ENCODE measurements at regions of chr9 and their contacts with region 1.

Region 1: DNA sequence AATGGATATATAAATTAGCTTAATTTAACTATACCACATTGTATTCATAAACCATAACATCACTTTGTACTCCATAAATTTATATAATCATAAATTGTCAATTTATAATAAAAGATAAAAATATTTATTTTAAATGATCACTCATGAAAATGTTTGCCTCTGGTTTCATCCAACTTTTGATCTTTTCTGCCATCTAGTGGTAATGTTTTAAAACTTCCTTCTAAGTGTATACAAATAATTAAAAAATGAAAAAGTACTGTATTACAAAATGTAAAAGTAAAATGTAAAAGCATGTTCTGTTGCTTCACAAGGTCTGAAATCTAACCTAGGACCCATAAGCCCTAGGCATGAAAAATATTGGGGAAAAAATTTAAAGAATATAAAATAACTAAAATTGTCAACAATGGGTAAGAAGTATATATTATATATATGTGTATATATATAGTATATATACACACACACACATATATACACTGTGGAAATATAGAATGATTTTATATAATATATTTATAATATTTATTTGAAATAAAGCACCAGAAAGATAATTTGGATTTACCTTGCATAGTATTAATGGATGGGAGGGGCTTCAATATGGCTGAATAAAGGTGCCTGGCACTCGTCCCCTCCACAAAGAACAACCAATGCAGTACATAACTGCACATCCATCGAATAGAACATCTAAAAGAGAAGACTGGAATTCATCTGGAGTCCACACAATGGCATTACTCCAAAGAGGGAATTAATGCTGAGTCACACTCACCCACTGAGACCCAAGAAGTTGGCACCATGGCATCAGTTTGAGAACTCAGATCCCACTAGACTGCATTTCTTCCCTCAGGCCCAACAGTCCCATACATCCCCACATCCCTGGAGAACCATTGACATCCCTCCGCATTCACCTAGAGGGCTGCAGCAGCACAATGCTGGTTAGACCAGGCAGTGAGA is 32.5 kb downstream of the ANXA1 start:
- DNase-seq: peak in 1 of 2 experiments; percentile 52
- H3K4me3 ChIP-seq: no peak overlapping the region
- H3K27ac ChIP-seq: no peak overlapping the region
- H3K4me1 ChIP-seq: peaks cover 23% of the 10 kb centered on the region
- H3K27me3 ChIP-seq: no peaks in the 10 kb centered on the region
- CTCF ChIP-seq: peak; percentile 80

Region 2: GRCh38 chr9:72592502-72593403 is 591.4 kb before region 1 on chr9:
- CTCF ChIA-PET with region 1: no interaction called
- POLR2A ChIA-PET with region 1: no interaction called
- intact Hi-C with region 1: loop called (anchors 2 kb)
- DNase-seq: peak; percentile 37 to 67
- H3K4me3 ChIP-seq: no peak overlapping the region
- H3K27ac ChIP-seq: 0 out of 2 replicates have a peak overlapping the region, but pooled peaks have one; percentile 31
- H3K4me1 ChIP-seq: peaks cover 27% of the 10 kb centered on the region
- H3K27me3 ChIP-seq: no peaks in the 10 kb centered on the region
- CTCF ChIP-seq: peak; percentile 96

Region 3: GRCh38 chr9:72871685-72872084 is 312.5 kb before region 1 on chr9:
- CTCF ChIA-PET with region 1: no interaction called
- POLR2A ChIA-PET with region 1: no interaction called
- intact Hi-C with region 1: loop called (anchors 2 kb)
- DNase-seq: no peak
- H3K4me3 ChIP-seq: no peak overlapping the region
- H3K27ac ChIP-seq: no peak overlapping the region
- H3K4me1 ChIP-seq: no peaks in the 10 kb centered on the region
- H3K27me3 ChIP-seq: no peaks in the 10 kb centered on the region
- CTCF ChIP-seq: peak; percentile 73

Region 4: GRCh38 chr9:73038613-73039012 is 145.6 kb before region 1 on chr9:
- CTCF ChIA-PET with region 1: no interaction called
- POLR2A ChIA-PET with region 1: no interaction called
- intact Hi-C with region 1: loop called (anchors 5 kb)
- DNase-seq: peak; percentile 53 to 57
- H3K4me3 ChIP-seq: no peak overlapping the region
- H3K27ac ChIP-seq: no peak overlapping the region
- H3K4me1 ChIP-seq: peaks cover 30% of the 10 kb centered on the region
- H3K27me3 ChIP-seq: no peaks in the 10 kb centered on the region
- CTCF ChIP-seq: no peak

Region 5: DNA sequence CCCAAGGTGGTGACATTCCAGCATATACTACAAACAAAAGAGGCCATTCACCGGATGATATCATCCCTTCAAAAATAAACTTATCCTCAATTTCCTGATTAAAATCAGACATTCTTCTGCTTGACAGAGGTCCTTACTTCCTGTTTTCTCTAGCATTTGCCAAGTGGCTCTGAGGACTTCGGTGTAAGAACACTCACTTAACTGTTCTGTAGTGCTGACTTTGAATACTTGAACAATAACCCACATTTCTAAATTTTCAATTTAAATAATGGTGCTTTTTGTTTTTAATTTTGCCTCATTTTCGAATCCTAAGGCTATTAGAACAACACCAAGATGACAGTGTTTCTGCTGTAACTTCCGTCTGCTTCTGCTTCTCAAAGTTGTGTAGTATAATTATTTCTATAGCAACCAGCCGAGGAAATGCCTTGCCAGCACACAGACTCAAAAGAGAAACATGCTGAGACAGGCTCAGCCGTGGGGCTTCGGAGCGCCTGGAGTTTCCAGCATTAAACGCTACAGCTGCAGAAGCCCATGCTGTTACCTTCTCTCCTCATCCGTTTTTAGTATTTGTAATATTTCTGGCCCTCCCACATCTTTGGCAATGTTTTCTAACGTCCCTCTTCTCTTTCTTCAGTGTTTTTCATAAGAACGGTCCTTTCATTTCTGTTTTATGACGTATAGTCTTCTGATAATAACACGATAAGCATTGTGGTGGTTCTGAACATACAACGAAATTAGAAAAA is 52.0 kb before region 1 on chr9:
- CTCF ChIA-PET with region 1: no interaction called
- POLR2A ChIA-PET with region 1: no interaction called
- intact Hi-C with region 1: loop called (anchors 1 kb)
- DNase-seq: peak; percentile 67 to 76
- H3K4me3 ChIP-seq: peak overlapping the region; percentile 55
- H3K27ac ChIP-seq: peak overlapping the region; percentile 78
- H3K4me1 ChIP-seq: peaks cover 31% of the 10 kb centered on the region
- H3K27me3 ChIP-seq: no peaks in the 10 kb centered on the region
- CTCF ChIP-seq: no peak

Region 6: GRCh38 chr9:73143606-73144328 is 40.4 kb before region 1 on chr9:
- CTCF ChIA-PET with region 1: no interaction called
- POLR2A ChIA-PET with region 1: no interaction called
- intact Hi-C with region 1: no loop called
- DNase-seq: peak; percentile 39 to 91
- H3K4me3 ChIP-seq: peak overlapping the region; percentile 16; the same call in 1 of the 2 replicates
- H3K27ac ChIP-seq: peak overlapping the region; percentile 96
- H3K4me1 ChIP-seq: peaks cover 44% of the 10 kb centered on the region
- H3K27me3 ChIP-seq: no peaks in the 10 kb centered on the region
- CTCF ChIP-seq: no peak

Region 7: GRCh38 chr9:73200694-73201452 is 16.7 kb after region 1 on chr9:
- CTCF ChIA-PET with region 1: interaction called, 3 read pairs
- POLR2A ChIA-PET with region 1: interaction called, 11 read pairs
- intact Hi-C with region 1: no loop called
- DNase-seq: peak in 1 of 2 experiments; percentile 8
- H3K4me3 ChIP-seq: peak overlapping the region; percentile 31; the same call in 1 of the 2 replicates
- H3K27ac ChIP-seq: no peak overlapping the region
- H3K4me1 ChIP-seq: peaks cover 8% of the 10 kb centered on the region; the same call in 1 of the 2 replicates
- H3K27me3 ChIP-seq: no peaks in the 10 kb centered on the region
- CTCF ChIP-seq: peak; percentile 76

Measured in PC-9 (cell line).